ENCODE measurements at regions of chr3 and their contacts with region 1.

Region 1: GRCh38 chr3:47225310-47225906 is 57.2 kb downstream of the KIF9 start:
- DNase-seq: peak; percentile 77
- ATAC-seq: peak; percentile 85
- H3K4me3 ChIP-seq: no peak overlapping the region; the same call in 1 of the 2 replicates
- H3K27ac ChIP-seq: peak overlapping the region; percentile 32; the same call in 1 of the 2 replicates
- H3K4me1 ChIP-seq: peaks cover 46% of the 10 kb centered on the region
- H3K27me3 ChIP-seq: no peaks in the 10 kb centered on the region
- CTCF ChIP-seq: no peak
- EP300 ChIP-seq: peak in 1 of 2 experiments; percentile 95; a peak in 2 of 4 replicates
- POLR2A ChIP-seq: no peak
- RAD21 ChIP-seq: no peak

Region 2: DNA sequence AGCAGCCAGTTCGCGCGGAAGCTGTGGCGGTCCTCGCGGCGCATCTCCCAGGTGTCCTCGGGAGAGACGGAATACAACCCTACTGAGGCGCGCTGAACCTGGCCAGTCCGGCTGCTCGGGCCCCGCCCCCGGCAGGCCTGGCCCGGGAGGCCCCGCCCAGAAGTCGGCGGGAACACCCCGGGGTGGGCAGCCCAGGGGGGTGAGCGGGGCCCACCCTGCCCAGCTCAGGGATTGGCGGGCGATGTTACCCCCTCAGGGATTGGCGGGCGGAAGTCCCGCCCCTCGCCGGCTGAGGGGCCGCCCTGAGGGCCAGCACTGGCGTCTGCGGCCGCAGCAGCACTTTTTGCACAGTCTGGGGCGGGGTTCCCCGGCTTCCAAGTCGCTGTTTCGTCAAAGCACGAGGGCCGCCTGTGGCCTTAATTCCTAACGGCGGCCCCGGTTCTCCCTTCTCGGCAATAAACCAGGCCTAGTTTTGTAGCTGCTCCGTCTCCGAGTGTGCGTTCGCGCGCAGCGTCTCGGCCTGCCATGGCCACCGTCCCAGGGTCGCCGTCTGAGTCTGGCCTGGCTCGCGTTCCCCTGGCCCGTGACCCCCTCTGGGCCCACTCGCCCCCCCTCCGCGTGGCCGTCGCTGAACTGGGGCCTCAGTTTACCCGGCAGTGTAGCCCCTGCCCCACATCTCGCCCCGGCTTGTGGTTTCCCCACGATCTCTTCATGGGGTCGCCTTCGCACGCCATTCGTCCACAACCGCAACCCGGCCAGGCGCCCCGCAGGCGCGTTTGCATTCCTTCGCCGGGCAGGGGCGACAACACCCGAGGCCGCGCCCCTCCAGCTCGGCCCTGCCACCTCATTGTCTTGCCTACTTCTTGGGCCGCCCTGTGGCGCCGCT is 215.9 kb before region 1 on chr3:
- CTCF ChIA-PET with region 1: no interaction called
- POLR2A ChIA-PET with region 1: no interaction called
- RAD21 ChIA-PET with region 1: no interaction called
- SMC1A ChIA-PET with region 1: interaction called, 3 read pairs
- in situ Hi-C with region 1: no loop called
- intact Hi-C with region 1: loop called (anchors 2 kb)
- DNase-seq: peak; percentile 40
- ATAC-seq: peak; percentile 96
- H3K4me3 ChIP-seq: peak overlapping the region; percentile 36; the same call in 1 of the 2 replicates
- H3K27ac ChIP-seq: peak overlapping the region; percentile 66
- H3K4me1 ChIP-seq: peaks cover 5% of the 10 kb centered on the region; the same call in 1 of the 2 replicates
- H3K27me3 ChIP-seq: no peaks in the 10 kb centered on the region
- CTCF ChIP-seq: no peak
- EP300 ChIP-seq: no peak
- POLR2A ChIP-seq: peak; percentile 34; the same call in 1 of the 2 replicates
- RAD21 ChIP-seq: no peak

Region 3: GRCh38 chr3:47082519-47082918 is 142.9 kb before region 1 on chr3:
- CTCF ChIA-PET with region 1: no interaction called
- POLR2A ChIA-PET with region 1: no interaction called
- RAD21 ChIA-PET with region 1: interaction called, 4 read pairs
- SMC1A ChIA-PET with region 1: interaction called, 6 read pairs
- in situ Hi-C with region 1: no loop called
- intact Hi-C with region 1: loop called (anchors 10 kb)
- DNase-seq: peak; percentile 51
- ATAC-seq: peak; percentile 95
- H3K4me3 ChIP-seq: no peak overlapping the region
- H3K27ac ChIP-seq: 0 out of 2 replicates have a peak overlapping the region, but pooled peaks have one; percentile 4
- H3K4me1 ChIP-seq: peaks cover 18% of the 10 kb centered on the region
- H3K27me3 ChIP-seq: no peaks in the 10 kb centered on the region
- CTCF ChIP-seq: no peak
- EP300 ChIP-seq: no peak
- POLR2A ChIP-seq: no peak
- RAD21 ChIP-seq: no peak

Region 4: DNA sequence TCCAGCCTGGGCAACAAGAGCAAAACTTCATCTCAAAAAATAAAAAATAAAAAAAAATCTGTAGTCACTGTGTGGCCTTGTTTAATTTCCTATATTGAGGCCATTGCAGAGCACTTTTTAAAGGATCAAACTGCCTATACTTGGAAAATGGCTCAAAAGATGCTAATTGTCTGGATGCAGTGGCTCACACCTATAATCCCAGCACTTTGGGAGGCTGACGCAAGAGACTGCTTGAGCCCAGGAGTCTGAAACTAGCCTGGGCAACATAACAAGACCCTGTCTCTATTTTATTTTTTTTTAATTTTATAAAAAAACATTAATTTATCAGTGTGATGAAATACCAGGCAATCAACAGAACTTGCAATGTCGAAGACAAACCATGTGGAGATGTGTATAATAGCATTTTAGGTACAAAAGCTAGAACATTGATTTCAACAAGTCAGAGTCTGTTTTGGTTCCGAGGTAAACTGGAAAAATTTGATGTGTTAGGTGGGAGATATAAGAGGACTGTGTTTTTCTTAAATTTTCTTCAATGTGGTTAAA is 14.5 kb before region 1 on chr3:
- CTCF ChIA-PET with region 1: interaction called, 4 read pairs
- POLR2A ChIA-PET with region 1: interaction called, 16 read pairs
- RAD21 ChIA-PET with region 1: no interaction called
- SMC1A ChIA-PET with region 1: interaction called, 4 read pairs
- in situ Hi-C with region 1: no loop called
- intact Hi-C with region 1: no loop called
- DNase-seq: no peak
- ATAC-seq: no peak
- H3K4me3 ChIP-seq: no peak overlapping the region
- H3K27ac ChIP-seq: no peak overlapping the region
- H3K4me1 ChIP-seq: no peaks in the 10 kb centered on the region
- H3K27me3 ChIP-seq: no peaks in the 10 kb centered on the region
- CTCF ChIP-seq: no peak
- EP300 ChIP-seq: no peak
- POLR2A ChIP-seq: no peak
- RAD21 ChIP-seq: no peak

Region 5: GRCh38 chr3:47578119-47578632 is 352.8 kb after region 1 on chr3:
- CTCF ChIA-PET with region 1: no interaction called
- POLR2A ChIA-PET with region 1: no interaction called
- RAD21 ChIA-PET with region 1: no interaction called
- SMC1A ChIA-PET with region 1: no interaction called
- in situ Hi-C with region 1: no loop called
- intact Hi-C with region 1: no loop called
- DNase-seq: no peak
- ATAC-seq: peak; percentile 77
- H3K4me3 ChIP-seq: peak overlapping the region; percentile 72; the same call in 1 of the 2 replicates
- H3K27ac ChIP-seq: no peak overlapping the region
- H3K4me1 ChIP-seq: no peaks in the 10 kb centered on the region
- H3K27me3 ChIP-seq: peaks cover 8 to 9% of the 10 kb centered on the region in 2 experiments
- CTCF ChIP-seq: no peak
- EP300 ChIP-seq: no peak
- POLR2A ChIP-seq: no peak
- RAD21 ChIP-seq: no peak

Measured in GM12878 (cell line).